ENCODE measurements at regions of chr5 and their contacts with region 1.

Region 1: DNA sequence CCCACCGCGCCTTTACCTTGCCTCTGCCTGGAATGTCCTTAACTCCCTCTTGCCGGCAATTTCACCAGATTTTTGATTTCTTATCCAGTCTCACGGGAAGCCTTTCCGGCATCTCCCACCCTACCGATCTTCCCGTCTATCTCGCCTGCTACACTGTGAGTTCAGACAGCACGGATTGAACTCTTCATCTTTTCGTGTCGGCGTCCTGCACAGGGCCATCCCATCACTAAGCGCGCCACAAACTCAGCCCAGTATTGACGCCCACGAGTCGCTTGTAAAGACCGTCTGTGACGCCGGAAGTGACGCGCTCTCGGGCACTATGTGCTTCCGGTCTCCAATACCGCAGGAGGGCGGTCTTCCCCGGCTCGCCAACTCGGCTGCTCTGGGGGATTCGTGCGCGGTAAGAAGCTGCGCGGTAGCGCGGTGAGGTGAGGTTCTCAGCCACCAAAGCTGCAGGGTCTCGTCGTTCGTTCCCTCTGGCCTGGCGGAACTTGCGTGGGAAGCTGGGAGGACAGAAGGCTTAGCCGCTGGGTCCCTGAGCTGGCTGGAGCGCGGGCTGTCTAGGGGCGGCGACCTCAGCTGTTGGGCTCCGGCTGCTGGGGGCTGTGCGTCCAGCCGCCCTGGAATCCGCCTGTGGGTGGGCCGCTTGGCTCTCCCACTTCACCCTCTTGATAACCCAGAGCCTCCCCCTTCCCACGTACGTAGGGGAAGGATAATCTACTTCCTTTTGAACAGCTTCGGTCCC is at the start of gene ZCCHC9:
- DNase-seq: peak; percentile 96
- H3K4me3 Mint-ChIP-seq: peak within 1 kb of the TSS; percentile 87
- H3K27ac Mint-ChIP-seq: peak within 1 kb of the TSS; percentile 88
- H3K4me1 Mint-ChIP-seq: peaks cover 44% of the 10 kb centered on the region
- H3K27me3 Mint-ChIP-seq: no peaks in the 10 kb centered on the region
- total RNA-seq, gene ZCCHC9: 31.8 to 33.5 TPM

Region 2: DNA sequence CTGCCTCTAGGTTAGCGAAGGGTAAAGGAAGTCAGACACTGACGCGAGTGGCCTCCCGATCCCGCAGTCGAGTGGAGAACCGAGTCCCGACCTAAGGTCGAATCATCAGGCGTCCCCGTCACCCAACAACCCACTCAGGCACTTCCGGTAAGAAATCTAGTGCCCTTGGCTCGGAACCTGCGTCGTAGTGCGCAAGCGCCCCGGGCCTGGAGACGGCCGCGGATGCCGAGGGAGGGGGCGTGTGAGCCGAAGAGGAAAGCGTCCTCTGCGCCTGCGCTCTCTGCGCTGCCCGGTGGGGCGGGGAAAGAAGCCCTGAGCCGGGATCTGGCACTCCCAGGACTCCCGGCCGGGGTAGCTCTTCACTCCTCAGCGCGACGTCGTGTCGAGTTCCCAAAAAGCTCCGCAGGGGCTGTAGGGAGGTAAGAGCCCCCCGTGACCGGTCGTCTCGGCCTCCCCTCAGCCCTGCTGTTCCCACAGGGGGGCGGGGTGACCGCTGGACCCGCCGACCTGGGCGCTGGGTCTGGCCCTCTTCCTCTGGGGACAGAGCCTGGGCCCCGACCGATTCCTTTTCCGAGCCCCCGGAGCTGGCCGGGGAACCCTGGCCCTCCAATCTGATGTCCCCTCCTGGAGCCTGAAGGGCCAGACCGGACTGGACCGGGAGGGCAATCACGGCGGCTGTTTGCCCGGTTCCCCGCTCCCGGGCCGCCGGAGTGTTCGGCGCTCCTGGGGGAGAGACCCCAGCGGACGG is 893.5 kb before region 1 on chr5 and contains the start of gene ZFYVE16:
- CTCF ChIA-PET with region 1: interaction called, 3 read pairs
- intact Hi-C with region 1: loop called (anchors 2 kb)
- DNase-seq: peak; percentile 97
- H3K4me3 Mint-ChIP-seq: peak within 1 kb of the TSS; percentile 97
- H3K27ac Mint-ChIP-seq: peak within 1 kb of the TSS; percentile 96
- H3K4me1 Mint-ChIP-seq: peaks cover 14% of the 10 kb centered on the region
- H3K27me3 Mint-ChIP-seq: no peaks in the 10 kb centered on the region
- total RNA-seq, gene ZFYVE16: 8.0 to 10.3 TPM

Region 3: GRCh38 chr5:80686757-80687156 is 614.7 kb before region 1 on chr5:
- CTCF ChIA-PET with region 1: interaction called, 3 read pairs
- intact Hi-C with region 1: loop called (anchors 2 kb)
- DNase-seq: no peak
- H3K4me3 Mint-ChIP-seq: no peak overlapping the region
- H3K27ac Mint-ChIP-seq: no peak overlapping the region
- H3K4me1 Mint-ChIP-seq: peaks cover 11% of the 10 kb centered on the region
- H3K27me3 Mint-ChIP-seq: no peaks in the 10 kb centered on the region

Region 4: DNA sequence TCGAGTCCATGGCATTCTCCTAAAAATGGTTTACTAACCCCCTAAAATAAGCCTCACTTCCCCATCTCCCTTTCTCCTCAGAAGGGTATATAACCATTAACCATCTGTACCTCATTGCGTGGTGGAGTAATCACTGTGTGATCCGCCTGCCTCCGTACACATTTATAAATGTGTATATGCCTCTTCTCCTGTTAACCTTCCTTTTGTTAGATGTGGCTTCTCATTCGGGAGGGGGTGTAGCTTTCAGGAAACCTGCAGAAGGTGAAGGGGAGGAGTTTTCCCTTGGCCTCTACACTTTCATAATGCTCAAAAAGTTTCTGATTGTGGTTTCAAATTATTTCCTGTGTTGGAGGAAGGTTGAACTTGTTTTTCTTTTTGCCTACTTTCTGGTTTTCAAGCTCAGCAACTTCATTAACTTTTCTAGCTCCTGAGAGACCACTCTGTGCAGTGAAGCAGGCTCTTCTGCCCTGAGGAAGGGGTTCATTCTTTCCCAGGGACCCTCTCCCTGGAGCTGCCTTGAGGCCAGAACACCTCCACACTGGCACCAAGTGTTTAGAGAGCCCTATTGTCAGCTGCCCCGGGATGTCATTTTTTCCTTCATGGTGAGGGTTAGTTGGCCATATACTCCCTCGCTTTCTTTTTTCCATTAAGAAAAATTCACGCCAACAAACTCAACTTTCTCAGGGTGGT is 294.4 kb before region 1 on chr5:
- CTCF ChIA-PET with region 1: no interaction called
- intact Hi-C with region 1: loop called (anchors 1 kb)
- DNase-seq: peak; percentile 81
- H3K4me3 Mint-ChIP-seq: peak overlapping the region; percentile 89
- H3K27ac Mint-ChIP-seq: peak overlapping the region; percentile 99
- H3K4me1 Mint-ChIP-seq: peaks cover 78% of the 10 kb centered on the region
- H3K27me3 Mint-ChIP-seq: no peaks in the 10 kb centered on the region

Region 5: GRCh38 chr5:81213070-81213469 is 88.4 kb before region 1 on chr5:
- CTCF ChIA-PET with region 1: no interaction called
- intact Hi-C with region 1: no loop called
- DNase-seq: no peak
- H3K4me3 Mint-ChIP-seq: no peak overlapping the region
- H3K27ac Mint-ChIP-seq: no peak overlapping the region
- H3K4me1 Mint-ChIP-seq: no peaks in the 10 kb centered on the region
- H3K27me3 Mint-ChIP-seq: no peaks in the 10 kb centered on the region

Region 6: GRCh38 chr5:81751009-81751835 is 449.8 kb after region 1 on chr5 and contains the start of gene SSBP2:
- CTCF ChIA-PET with region 1: no interaction called
- intact Hi-C with region 1: loop called (anchors 1 kb)
- DNase-seq: peak; percentile 98
- H3K4me3 Mint-ChIP-seq: peak within 1 kb of the TSS; percentile 92
- H3K27ac Mint-ChIP-seq: peak within 1 kb of the TSS; percentile 80
- H3K4me1 Mint-ChIP-seq: peaks cover 27% of the 10 kb centered on the region
- H3K27me3 Mint-ChIP-seq: no peaks in the 10 kb centered on the region
- total RNA-seq, gene SSBP2: 14.5 to 14.7 TPM

Region 7: GRCh38 chr5:82165740-82166530 is 864.5 kb after region 1 on chr5:
- CTCF ChIA-PET with region 1: no interaction called
- intact Hi-C with region 1: loop called (anchors 5 kb)
- DNase-seq: peak; percentile 56
- H3K4me3 Mint-ChIP-seq: no peak overlapping the region
- H3K27ac Mint-ChIP-seq: no peak overlapping the region
- H3K4me1 Mint-ChIP-seq: peaks cover 15% of the 10 kb centered on the region
- H3K27me3 Mint-ChIP-seq: no peaks in the 10 kb centered on the region

Region 8: DNA sequence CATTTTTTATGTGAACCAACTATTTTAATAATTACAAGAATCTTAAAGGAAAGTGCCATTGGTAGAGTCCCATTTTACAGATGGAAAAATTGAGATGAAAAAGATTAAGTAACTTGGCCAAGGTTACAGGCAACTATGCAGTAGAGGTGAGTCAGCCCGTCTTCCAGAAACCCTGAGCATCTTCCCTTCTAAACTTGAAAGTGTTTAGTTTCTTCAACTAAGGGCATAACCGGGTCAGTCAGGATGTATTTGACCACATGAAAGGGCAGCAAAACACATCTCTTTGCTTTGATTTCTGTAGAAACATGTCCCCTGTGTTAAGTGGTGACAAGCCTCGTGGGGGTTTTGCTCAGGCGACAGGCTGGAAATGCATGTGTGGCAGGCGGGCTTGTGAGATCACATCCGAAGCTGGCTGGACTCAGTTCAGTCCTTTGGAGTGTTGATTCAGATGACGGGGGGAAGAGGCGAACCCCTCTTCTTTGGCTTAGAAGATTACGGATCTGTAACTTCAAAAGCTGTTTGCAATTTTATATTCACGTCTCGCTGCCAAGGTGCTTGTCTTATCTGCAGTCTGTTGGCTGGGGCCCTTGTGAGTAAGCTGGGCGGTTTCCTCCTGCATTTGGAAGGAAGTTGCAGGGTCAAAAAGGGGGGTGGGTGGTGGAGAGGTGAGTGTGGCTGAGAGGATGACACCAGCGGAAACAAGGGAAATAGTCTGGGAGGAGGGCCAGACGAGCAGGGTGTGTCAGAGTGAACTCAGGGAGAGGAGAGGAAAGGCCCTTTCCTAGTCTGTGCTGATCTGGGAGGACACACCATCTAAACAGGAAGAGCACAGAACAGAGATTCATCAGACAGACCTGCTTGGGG is 1055.6 kb after region 1 on chr5:
- CTCF ChIA-PET with region 1: no interaction called
- intact Hi-C with region 1: loop called (anchors 1 kb)
- DNase-seq: peak; percentile 91
- H3K4me3 Mint-ChIP-seq: peak overlapping the region; percentile 54
- H3K27ac Mint-ChIP-seq: peak overlapping the region; percentile 97
- H3K4me1 Mint-ChIP-seq: peaks cover 50% of the 10 kb centered on the region
- H3K27me3 Mint-ChIP-seq: no peaks in the 10 kb centered on the region

Measured in activated naive CD4-positive, alpha-beta T cell treated with anti-CD3 and anti-CD28 coated beads for 36 hours (primary cell).